ENCODE measurements at regions of chr15 and their contacts with region 1.

Region 1: GRCh38 chr15:60326824-60327654 is 70.7 kb downstream of the ANXA2 start:
- DNase-seq: peak; percentile 23
- H3K4me3 Mint-ChIP-seq: no peak overlapping the region
- H3K27ac Mint-ChIP-seq: no peak overlapping the region
- H3K4me1 Mint-ChIP-seq: peaks cover 2% of the 10 kb centered on the region
- H3K27me3 Mint-ChIP-seq: peaks cover 35% of the 10 kb centered on the region

Region 2: DNA sequence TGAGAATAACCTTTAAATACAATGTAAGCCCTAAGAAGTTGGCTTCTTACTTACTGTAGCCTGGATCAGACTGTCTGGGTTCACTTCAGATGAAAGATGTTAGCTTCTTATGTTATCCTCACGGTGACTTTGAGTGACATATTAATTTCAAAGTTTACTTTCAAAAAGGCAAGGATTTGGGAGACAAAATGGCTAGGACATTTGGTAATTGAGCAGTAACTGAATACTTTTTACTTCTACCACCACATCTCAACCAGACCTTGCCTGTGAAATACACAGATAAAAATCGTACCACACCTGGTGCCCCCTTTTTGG is 601.9 kb before region 1 on chr15:
- CTCF ChIA-PET with region 1: interaction called, 97 read pairs
- POLR2A ChIA-PET with region 1: no interaction called
- intact Hi-C with region 1: loop called (anchors 1 kb)
- DNase-seq: no peak
- H3K4me3 Mint-ChIP-seq: no peak overlapping the region
- H3K27ac Mint-ChIP-seq: no peak overlapping the region
- H3K4me1 Mint-ChIP-seq: no peaks in the 10 kb centered on the region
- H3K27me3 Mint-ChIP-seq: peaks cover 7% of the 10 kb centered on the region

Region 3: GRCh38 chr15:59741274-59741906 is 585.6 kb before region 1 on chr15:
- CTCF ChIA-PET with region 1: interaction called, 19 read pairs
- POLR2A ChIA-PET with region 1: no interaction called
- intact Hi-C with region 1: no loop called
- DNase-seq: no peak
- H3K4me3 Mint-ChIP-seq: no peak overlapping the region
- H3K27ac Mint-ChIP-seq: no peak overlapping the region
- H3K4me1 Mint-ChIP-seq: no peaks in the 10 kb centered on the region
- H3K27me3 Mint-ChIP-seq: peaks cover 4% of the 10 kb centered on the region

Region 4: GRCh38 chr15:59751552-59752413 is 575.3 kb before region 1 on chr15:
- CTCF ChIA-PET with region 1: interaction called, 17 read pairs
- POLR2A ChIA-PET with region 1: no interaction called
- intact Hi-C with region 1: loop called (anchors 2 kb)
- DNase-seq: no peak
- H3K4me3 Mint-ChIP-seq: no peak overlapping the region
- H3K27ac Mint-ChIP-seq: no peak overlapping the region
- H3K4me1 Mint-ChIP-seq: peaks cover 8% of the 10 kb centered on the region
- H3K27me3 Mint-ChIP-seq: no peaks in the 10 kb centered on the region

Region 5: GRCh38 chr15:59997070-59997701 is 329.9 kb before region 1 on chr15:
- CTCF ChIA-PET with region 1: interaction called, 6 read pairs
- POLR2A ChIA-PET with region 1: no interaction called
- intact Hi-C with region 1: loop called (anchors 1 kb)
- DNase-seq: peak; percentile 80
- H3K4me3 Mint-ChIP-seq: peak overlapping the region; percentile 68
- H3K27ac Mint-ChIP-seq: peak overlapping the region; percentile 14
- H3K4me1 Mint-ChIP-seq: peaks cover 51% of the 10 kb centered on the region
- H3K27me3 Mint-ChIP-seq: peaks cover 96% of the 10 kb centered on the region

Region 6: DNA sequence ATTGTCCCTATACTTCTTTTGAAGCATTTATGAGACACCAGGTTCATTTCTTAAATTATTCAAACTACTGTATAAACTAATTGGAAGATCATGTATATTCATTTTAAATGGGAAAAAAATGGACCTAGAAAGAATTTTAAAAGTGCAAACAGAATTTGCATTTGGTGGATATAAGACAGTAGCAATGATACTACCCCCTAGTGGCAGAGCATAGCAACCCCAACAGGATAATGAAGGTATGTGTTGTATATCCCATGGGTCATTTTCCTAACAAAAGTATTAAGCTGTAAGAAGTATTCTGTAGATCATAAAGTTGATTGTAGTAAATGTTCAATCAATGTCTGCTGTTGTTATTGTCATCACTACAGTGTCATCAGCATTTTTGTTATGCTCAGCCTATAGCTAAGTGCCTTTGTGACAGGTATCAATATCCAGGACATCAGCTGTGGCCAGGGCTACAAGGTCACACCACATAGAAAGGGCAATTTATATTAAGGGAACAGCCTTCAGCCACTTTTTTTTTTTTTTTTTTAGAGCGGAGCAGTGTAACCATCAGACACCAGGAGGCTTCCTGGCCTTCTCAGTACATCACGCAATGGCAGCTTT is 147.2 kb before region 1 on chr15:
- CTCF ChIA-PET with region 1: interaction called, 12 read pairs
- POLR2A ChIA-PET with region 1: no interaction called
- intact Hi-C with region 1: loop called (anchors 10 kb)
- DNase-seq: peak; percentile 21
- H3K4me3 Mint-ChIP-seq: no peak overlapping the region
- H3K27ac Mint-ChIP-seq: no peak overlapping the region
- H3K4me1 Mint-ChIP-seq: no peaks in the 10 kb centered on the region
- H3K27me3 Mint-ChIP-seq: peaks cover 21% of the 10 kb centered on the region

Region 7: DNA sequence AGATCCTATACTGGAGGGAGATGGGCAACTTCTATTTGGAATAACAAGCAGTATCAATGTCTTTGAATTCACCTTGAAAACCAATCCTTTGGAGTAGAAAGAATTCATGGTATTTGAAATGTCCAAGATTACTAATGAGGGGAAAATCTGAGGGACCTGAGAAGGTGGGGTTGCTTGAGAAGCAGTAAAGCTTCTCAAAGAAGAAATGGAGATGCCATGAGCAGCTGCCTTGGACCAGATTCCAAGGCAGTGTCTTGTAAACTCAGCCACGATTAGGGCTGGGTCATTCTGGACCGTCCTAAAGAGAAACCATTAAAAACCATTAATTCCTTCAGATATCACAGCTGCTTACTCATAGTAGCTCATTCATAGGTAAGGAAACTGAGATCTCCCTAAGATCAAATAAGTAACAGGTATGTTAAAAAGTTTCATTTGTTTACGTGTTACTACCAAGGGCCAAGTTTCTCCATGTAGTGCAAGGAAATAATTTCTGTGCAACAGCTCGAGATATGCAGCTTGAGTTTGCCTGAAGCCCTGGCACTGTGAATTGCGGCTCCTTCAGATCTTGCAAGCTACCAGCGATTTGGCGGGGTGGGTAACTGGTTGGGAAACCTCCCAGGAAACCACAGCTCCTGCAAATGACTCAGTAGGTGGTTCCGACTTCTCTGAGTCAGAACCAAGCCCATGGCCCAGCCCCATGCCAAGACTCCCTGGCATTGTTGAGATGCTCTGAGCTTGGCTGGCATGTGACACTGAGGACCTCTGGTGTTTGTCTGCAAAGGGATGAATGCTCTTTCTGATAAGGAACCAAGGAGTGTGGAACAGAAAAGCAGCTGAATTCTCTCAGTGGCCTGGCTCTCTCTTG is 605.2 kb after region 1 on chr15:
- CTCF ChIA-PET with region 1: interaction called, 13 read pairs
- POLR2A ChIA-PET with region 1: no interaction called
- intact Hi-C with region 1: loop called (anchors 1 kb)
- DNase-seq: peak; percentile 86
- H3K4me3 Mint-ChIP-seq: no peak overlapping the region
- H3K27ac Mint-ChIP-seq: no peak overlapping the region
- H3K4me1 Mint-ChIP-seq: peaks cover 15% of the 10 kb centered on the region
- H3K27me3 Mint-ChIP-seq: peaks cover 7% of the 10 kb centered on the region